Heart right ventricle (tissue), 16 donors: ENCODE measurements at regions of chr1 and their contacts with region 1.

Region 1: DNA sequence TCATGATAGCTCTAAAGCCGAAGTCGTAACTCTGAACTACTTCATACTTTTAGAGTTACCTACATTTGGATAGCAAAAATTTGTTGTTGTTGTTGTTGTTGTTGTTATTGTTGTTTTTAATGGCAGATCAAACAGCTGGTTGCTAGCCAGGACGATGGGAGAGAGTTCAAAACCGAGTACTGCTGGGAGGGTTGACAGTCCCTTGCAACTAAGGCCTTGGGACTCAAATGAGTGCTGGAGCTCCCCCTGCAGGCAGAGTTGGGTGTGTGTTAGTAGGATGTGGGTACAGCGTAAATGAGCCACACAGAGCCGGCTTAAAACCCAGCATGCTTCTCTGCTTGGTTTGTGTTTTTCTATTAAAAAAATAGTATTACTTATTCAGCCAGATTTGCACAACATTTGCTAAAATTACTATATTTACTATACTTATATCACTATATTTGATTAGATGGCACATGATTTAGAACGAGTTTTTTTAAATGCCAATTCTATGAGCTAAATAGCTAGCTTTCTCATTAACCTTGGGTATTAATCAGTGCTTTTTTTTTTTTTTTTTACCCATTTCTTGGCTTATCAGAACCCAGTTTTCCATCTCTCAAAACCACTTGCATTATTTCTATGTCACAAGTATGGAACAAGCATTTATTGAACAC is 129.2 kb upstream of the SYT6 start:
- DNase-seq: peak; percentile 84 to 91
- ATAC-seq: peak; percentile 93 to 98 (median 97)
- H3K4me3 ChIP-seq: no peak overlapping the region
- H3K27ac ChIP-seq: no peak overlapping the region
- H3K4me1 ChIP-seq: peaks cover 0 to 3% (median 0%) of the 10 kb centered on the region in 9 donors
- H3K27me3 ChIP-seq: peaks cover 0 to 4% (median 0%) of the 10 kb centered on the region in 7 donors
- CTCF ChIP-seq: peak; percentile 78 to 93 (median 89)

Region 2: GRCh38 chr1:113830039-113830438 is 452.8 kb before region 1 on chr1:
- intact Hi-C with region 1: loop called in 7 of 10 experiments (anchors 5 to 10 kb)
- DNase-seq: no peak
- ATAC-seq: no peak
- H3K4me3 ChIP-seq: no peak overlapping the region
- H3K27ac ChIP-seq: no peak overlapping the region
- H3K4me1 ChIP-seq: no peaks in the 10 kb centered on the region
- H3K27me3 ChIP-seq: peaks cover 0 to 3% (median 0%) of the 10 kb centered on the region in 7 donors
- CTCF ChIP-seq: no peak

Region 3: DNA sequence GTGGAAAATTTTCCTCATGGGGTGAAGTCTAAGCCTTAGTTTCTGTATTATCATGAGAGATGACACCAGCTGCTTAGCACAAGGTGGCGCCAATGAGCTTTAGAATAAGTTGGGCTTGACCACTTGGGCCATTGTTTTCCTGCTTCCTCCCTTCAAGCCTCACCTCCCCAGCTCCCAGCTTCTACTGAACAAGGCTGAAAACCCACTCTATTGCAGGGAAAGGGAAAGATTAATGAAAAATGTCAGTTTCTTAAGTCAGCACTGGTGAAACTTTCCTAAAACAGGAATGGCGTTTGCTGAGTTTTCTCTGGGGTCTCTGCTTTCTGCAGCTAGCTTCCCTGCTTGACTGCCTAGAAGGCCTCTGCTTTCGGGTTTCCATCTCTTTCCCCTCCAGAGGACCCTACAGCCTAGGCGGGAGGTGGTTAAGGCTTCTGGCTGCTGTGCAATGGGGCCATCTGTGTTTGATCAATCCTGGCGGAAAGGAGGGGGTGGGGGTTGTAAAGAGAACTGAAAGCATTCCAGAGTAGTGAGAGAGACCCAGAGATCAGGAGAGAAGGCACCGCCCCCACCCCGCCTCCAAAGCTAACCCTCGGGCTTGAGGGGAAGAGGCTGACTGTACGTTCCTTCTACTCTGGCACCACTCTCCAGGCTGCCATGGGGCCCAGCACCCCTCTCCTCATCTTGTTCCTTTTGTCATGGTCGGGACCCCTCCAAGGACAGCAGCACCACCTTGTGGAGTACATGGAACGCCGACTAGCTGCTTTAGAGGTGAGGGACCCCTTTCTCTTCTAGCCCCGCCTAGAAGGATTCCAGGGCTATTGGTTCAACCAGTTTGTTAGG is 303.8 kb before region 1 on chr1 and contains the start of gene OLFML3:
- intact Hi-C with region 1: loop called (anchors 1 to 5 kb)
- DNase-seq: peak; percentile 70 to 92
- ATAC-seq: peak; percentile 66 to 83 (median 74)
- H3K4me3 ChIP-seq: peak within 1 kb of the TSS in 9 of 10 donors; percentile 10 to 48 (median 44)
- H3K27ac ChIP-seq: peak within 1 kb of the TSS in 9 of 10 donors; percentile 14 to 76 (median 61)
- H3K4me1 ChIP-seq: peaks cover 0 to 75% (median 69%) of the 10 kb centered on the region in 9 donors
- H3K27me3 ChIP-seq: no peaks in the 10 kb centered on the region
- CTCF ChIP-seq: peak; percentile 40 to 87 (median 74)
- total RNA-seq, gene OLFML3: 6.1 to 19.7 (median 11.0) TPM

Region 4: GRCh38 chr1:114108751-114109255 is 174.1 kb before region 1 on chr1:
- intact Hi-C with region 1: loop called in 2 of 10 experiments (anchors 5 to 10 kb)
- DNase-seq: no peak
- ATAC-seq: peak in 4 of 8 donors; percentile 28 to 57 (median 36)
- H3K4me3 ChIP-seq: no peak overlapping the region
- H3K27ac ChIP-seq: peak overlapping the region in 1 of 10 donors; percentile 76
- H3K4me1 ChIP-seq: peaks cover 0 to 26% (median 0%) of the 10 kb centered on the region in 9 donors
- H3K27me3 ChIP-seq: peaks cover 0 to 12% (median 0%) of the 10 kb centered on the region in 7 donors
- CTCF ChIP-seq: no peak